ENCODE measurements at regions of chr20 and their contacts with region 1.

Region 1: DNA sequence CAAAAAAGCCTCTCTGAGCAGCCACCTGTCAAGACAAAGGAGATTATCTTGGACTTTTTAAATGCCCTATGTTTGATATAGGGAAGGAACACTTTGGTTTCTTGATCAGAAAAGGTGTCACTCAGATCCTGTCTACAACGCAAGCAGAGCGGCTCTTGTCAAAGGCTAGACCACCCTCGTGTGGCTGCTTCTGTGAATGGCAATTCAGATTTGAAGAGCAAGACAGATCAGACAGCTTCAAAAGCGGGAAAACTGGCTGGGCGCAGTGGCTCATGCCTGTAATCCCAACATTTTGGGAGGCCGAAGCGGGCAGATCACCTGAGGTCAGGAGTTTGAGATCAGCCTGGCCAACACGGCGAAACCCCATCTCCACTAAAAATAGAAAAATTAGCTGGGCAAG is 10.1 kb upstream of the NXT1 start:
- DNase-seq: peak in 1 of 2 experiments; percentile 70
- H3K4me3 ChIP-seq: no peak overlapping the region
- H3K27ac ChIP-seq: no peak overlapping the region
- H3K4me1 ChIP-seq: peaks cover 0 to 5% (median 0%) of the 10 kb centered on the region in 4 experiments; a peak in 3 of 7 replicates
- H3K27me3 ChIP-seq: no peaks in the 10 kb centered on the region
- CTCF ChIP-seq: peak; percentile 51 to 87 (median 83)
- EP300 ChIP-seq: no peak
- POLR2A ChIP-seq: no peak
- RAD21 ChIP-seq: peak; percentile 94

Region 2: DNA sequence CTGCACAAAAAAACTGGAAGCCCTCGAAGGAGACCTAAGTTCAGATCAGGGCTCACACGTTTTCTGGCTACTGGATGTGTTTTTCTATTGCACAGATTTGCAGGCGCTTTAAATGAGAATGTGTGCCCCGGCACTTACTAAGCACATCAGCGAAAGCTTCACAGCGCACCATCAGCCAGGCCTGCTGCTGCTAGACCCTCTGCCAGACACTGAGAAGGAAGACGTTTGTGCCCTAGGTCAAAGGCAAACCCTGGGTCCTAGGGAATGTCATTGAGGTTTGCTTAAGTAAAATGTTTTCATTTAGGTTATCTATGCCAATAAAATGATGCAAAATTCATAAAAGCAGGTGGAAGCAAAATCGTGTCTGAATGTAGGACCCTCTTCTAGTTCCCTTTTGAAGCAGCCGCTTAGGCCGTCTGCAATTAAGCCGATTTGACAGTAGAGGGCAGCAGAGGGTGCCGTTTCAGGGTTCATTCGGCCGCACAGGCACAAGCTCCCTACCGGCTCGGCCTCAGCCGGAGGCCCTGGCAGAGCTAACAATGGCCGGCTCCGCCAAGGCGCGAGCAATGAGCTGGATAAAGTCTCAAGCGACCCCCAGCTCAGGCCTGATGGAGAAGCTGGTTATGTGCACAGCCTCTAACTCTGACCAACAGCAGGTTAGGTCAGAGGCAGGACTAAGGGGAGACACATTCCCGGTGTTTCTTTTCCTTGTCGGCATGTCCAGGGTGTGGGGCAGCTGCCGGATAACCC is 649.0 kb before region 1 on chr20:
- CTCF ChIA-PET with region 1: interaction called, 48 read pairs
- POLR2A ChIA-PET with region 1: no interaction called
- DNase-seq: peak; percentile 58 to 84
- H3K4me3 ChIP-seq: no peak overlapping the region
- H3K27ac ChIP-seq: no peak overlapping the region
- H3K4me1 ChIP-seq: peaks cover 0 to 2% (median 0%) of the 10 kb centered on the region in 4 experiments; a peak in 1 of 7 replicates
- H3K27me3 ChIP-seq: no peaks in the 10 kb centered on the region; a peak in 2 of 7 replicates
- CTCF ChIP-seq: peak; percentile 77 to 90 (median 89)
- EP300 ChIP-seq: no peak
- POLR2A ChIP-seq: no peak
- RAD21 ChIP-seq: peak; percentile 92 to 96

Region 3: DNA sequence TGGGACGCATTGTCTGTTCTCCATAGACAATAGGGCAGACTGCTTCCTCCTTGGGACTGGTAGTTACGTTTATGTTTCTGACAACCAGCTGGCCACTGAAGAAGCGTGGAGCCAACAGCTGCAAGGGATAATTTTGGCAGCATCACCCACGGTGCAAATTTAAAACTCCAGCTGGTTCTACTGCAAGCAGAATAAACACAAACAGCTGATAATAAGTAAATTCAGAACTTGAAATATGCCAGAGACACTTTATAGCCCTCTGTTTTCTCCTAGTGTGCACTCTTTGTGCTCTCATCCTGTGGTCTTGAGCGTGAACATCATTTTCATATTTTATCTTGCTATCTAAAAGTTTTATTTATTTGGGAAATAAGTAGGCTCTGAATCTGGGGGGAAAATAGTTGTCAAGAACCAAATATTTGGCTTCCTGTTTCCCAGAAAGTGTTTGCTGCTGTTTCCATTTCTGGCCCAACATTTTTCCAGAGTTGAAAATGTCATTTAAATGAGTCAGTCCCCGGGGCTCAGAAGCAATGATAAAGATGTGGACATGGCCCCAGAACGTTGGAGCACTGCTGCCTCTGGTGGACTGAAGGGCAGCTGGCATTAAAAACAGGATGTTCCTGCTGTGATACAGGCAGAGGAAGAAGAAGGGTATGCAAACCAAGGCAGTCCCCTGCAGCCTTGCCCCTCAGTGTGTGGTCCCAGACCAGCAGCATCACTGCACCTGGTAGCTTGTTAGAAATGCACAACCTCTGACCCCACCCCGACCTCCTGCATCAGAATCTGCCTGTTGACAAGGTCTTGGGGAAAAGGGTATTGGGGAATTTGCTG is 278.6 kb before region 1 on chr20:
- CTCF ChIA-PET with region 1: interaction called, 17 read pairs
- POLR2A ChIA-PET with region 1: no interaction called
- DNase-seq: peak in 1 of 2 experiments; percentile 57
- H3K4me3 ChIP-seq: no peak overlapping the region
- H3K27ac ChIP-seq: 0 out of 2 replicates have a peak overlapping the region, but pooled peaks have one; percentile 4
- H3K4me1 ChIP-seq: peaks cover 0 to 9% (median 4%) of the 10 kb centered on the region in 4 experiments; a peak in 5 of 7 replicates
- H3K27me3 ChIP-seq: no peaks in the 10 kb centered on the region
- CTCF ChIP-seq: peak; percentile 45 to 81 (median 63)
- EP300 ChIP-seq: peak in 1 of 2 experiments; percentile 70; a peak in 1 of 3 replicates
- POLR2A ChIP-seq: no peak
- RAD21 ChIP-seq: peak; percentile 59 to 64

Region 4: GRCh38 chr20:23235173-23236027 is 105.1 kb before region 1 on chr20:
- CTCF ChIA-PET with region 1: interaction called, 36 read pairs
- POLR2A ChIA-PET with region 1: no interaction called
- DNase-seq: peak; percentile 39 to 71
- H3K4me3 ChIP-seq: no peak overlapping the region
- H3K27ac ChIP-seq: no peak overlapping the region
- H3K4me1 ChIP-seq: no peaks in the 10 kb centered on the region; a peak in 1 of 7 replicates
- H3K27me3 ChIP-seq: no peaks in the 10 kb centered on the region
- CTCF ChIP-seq: peak; percentile 88 to 94 (median 91)
- EP300 ChIP-seq: no peak
- POLR2A ChIP-seq: no peak
- RAD21 ChIP-seq: peak; percentile 90 to 91

Region 5: DNA sequence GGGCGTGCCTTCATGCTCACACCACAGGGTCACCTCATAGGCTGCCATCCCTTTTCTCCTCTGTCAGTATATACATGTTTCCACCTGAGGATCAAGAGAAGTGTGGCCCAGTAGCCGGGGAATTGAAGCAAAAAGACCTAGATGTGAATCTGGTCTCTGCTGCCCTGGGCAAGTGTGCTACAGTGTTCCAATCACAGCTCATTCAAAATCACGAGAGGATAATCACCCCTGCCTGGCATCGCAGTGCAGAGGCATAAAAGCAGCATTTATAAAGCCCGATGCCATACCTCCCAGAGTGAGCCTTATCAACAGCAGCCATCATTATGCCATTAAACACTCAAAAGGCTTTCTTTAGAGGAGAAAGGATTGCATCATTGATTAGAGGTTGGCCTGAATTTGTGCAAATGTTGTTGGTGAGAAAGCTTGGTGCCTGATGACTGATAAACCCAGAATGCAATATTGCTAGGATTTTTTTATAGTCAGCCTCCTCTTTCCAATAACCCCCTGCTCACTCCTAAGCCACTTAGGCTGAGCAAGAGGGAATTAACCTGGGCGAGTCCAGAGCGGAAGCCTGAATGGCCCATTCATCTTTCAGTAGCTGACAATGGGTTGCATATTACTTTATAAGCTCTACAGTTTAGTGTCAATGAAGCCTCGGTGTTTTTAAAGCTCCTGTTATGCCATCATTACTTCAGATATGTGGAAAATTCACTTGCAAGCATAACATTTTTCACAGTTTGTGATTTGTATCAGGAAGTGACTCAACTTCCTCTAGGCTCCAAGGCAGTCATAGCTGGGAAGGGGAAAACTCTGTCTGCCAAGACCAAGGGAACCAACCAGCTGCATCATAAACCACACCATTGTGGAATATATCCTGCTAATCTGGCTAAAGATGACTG is 82.4 kb before region 1 on chr20:
- CTCF ChIA-PET with region 1: interaction called, 12 read pairs
- POLR2A ChIA-PET with region 1: no interaction called
- DNase-seq: peak in 1 of 2 experiments; percentile 28
- H3K4me3 ChIP-seq: no peak overlapping the region
- H3K27ac ChIP-seq: no peak overlapping the region
- H3K4me1 ChIP-seq: no peaks in the 10 kb centered on the region
- H3K27me3 ChIP-seq: no peaks in the 10 kb centered on the region
- CTCF ChIP-seq: no peak
- EP300 ChIP-seq: no peak
- POLR2A ChIP-seq: no peak
- RAD21 ChIP-seq: no peak

Region 6: DNA sequence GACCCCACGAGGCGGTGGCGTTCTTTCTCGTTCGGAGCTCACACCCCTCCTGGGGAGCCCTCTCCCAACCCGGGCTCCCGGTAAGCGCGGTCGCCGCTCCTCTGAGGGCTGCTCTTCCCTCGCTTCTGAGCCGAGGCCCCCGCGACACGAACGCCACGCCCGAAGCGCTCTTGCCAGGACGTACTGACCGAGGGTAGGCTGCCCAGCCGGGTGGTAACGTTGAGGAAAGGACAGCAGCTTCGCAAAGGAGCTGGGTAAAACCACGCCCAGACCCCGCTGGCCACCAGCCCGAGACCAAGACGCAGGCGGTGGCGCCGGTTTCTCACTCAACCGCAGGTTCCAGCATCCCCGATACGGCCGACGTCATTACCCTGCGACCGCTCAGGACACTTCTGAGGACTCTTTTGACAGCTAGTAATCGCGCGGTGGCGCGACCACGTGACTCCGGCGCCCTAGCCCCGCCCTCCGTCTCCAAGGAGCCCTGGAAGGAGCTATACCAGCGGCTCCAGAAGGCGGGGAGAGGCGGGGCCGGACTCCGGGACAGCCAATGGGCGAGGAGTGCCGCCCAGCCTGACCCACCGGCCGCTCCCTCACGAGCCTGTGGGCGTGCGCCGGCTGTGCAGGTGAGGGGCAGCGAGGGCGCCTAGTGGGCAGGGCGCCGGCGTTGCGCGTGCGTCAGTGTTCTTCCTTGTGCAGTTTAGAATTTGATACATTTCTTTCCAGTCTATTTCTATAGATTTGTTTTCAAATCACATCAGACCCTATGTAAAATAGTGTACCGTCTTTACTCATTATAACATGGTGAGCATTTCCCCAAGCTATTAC is 17.5 kb after region 1 on chr20:
- CTCF ChIA-PET with region 1: interaction called, 15 read pairs
- POLR2A ChIA-PET with region 1: no interaction called
- DNase-seq: peak; percentile 99 to 100
- H3K4me3 ChIP-seq: peak overlapping the region; percentile 81 to 95 (median 85)
- H3K27ac ChIP-seq: peak overlapping the region; percentile 61
- H3K4me1 ChIP-seq: peaks cover 1 to 11% (median 8%) of the 10 kb centered on the region in 4 experiments; a peak in 5 of 7 replicates
- H3K27me3 ChIP-seq: no peaks in the 10 kb centered on the region
- CTCF ChIP-seq: peak in 1 of 3 experiments; percentile 9; a peak in 1 of 4 replicates
- EP300 ChIP-seq: peak in 1 of 2 experiments; percentile 45; a peak in 1 of 3 replicates
- POLR2A ChIP-seq: peak in 1 of 2 experiments; percentile 65; a peak in 2 of 3 replicates
- RAD21 ChIP-seq: no peak; a peak in 1 of 4 replicates

Measured in H1 (cell line).